T-cell (primary cell): ENCODE measurements at regions of chr21 and their contacts with region 1.

Region 1: GRCh38 chr21:29372063-29372802 is 73.5 kb downstream of the BACH1 start:
- DNase-seq: peak in 30 of 35 experiments; percentile 9 to 86 (median 34)
- ATAC-seq: peak; percentile 57 to 87 (median 69)
- H3K4me3 ChIP-seq: no peak overlapping the region
- H3K4me3 Mint-ChIP-seq: no peak overlapping the region
- H3K27ac ChIP-seq: no peak overlapping the region
- H3K27ac Mint-ChIP-seq: no peak overlapping the region
- H3K4me1 ChIP-seq: peaks cover 0 to 7% of the 10 kb centered on the region in 2 experiments
- H3K4me1 Mint-ChIP-seq: peaks cover 10 to 16% (median 10%) of the 10 kb centered on the region in 3 donors
- H3K27me3 ChIP-seq: no peaks in the 10 kb centered on the region
- H3K27me3 Mint-ChIP-seq: no peaks in the 10 kb centered on the region

Region 2: GRCh38 chr21:29405503-29406122 is 33.4 kb after region 1 on chr21:
- CTCF ChIA-PET with region 1: interaction called in 1 of 2 experiments, 12 read pairs
- POLR2A ChIA-PET with region 1: no interaction called
- DNase-seq: no peak
- ATAC-seq: no peak
- H3K4me3 ChIP-seq: no peak overlapping the region
- H3K4me3 Mint-ChIP-seq: no peak overlapping the region
- H3K27ac ChIP-seq: no peak overlapping the region
- H3K27ac Mint-ChIP-seq: no peak overlapping the region
- H3K4me1 ChIP-seq: no peaks in the 10 kb centered on the region
- H3K4me1 Mint-ChIP-seq: no peaks in the 10 kb centered on the region
- H3K27me3 ChIP-seq: no peaks in the 10 kb centered on the region
- H3K27me3 Mint-ChIP-seq: no peaks in the 10 kb centered on the region